ENCODE measurements at regions of chr1 and their contacts with region 1.

Region 1: DNA sequence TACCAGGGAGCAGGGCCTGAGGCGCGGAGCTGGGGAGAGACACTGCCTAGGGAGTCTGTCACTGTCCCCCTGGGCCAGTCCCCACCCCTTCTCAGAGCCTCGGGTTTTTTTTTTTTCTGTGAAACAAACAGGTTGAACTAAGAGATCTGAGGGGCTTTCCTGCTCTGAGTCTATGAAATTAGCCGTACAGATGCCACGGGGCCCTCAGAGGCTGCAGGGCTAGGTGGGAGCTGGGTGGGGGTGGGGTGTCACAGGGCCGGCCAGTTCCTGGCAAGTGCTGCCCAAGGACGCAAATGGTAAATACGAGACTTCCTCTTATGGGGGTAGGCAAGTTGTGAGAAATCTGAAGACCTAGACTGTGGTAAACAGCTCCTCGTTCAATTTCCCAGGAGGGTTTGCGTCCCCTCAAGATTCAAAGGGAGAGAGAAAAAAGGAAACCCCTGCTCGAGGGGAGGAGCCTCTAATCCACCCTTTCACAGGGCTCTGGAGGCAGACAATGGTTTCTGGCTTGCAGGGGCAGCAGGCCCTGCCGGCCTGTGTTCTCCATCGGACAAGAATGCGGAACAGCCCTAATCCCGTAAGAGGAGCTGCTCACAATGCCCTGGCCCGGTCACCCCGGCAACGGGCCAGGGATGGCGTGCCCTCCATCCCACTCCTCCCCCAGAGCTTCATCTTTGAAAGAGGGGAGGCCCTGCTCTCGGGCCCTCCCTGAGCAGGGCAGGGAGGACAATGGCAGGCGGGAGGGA is 7.8 kb downstream of the NUAK2 start:
- DNase-seq: peak; percentile 90
- ATAC-seq: peak; percentile 83
- H3K4me3 ChIP-seq: peak overlapping the region; percentile 39 to 74 (median 56)
- H3K4me3 Mint-ChIP-seq: peak overlapping the region; percentile 94
- H3K27ac ChIP-seq: peak overlapping the region; percentile 82 to 98
- H3K27ac Mint-ChIP-seq: peak overlapping the region; percentile 98
- H3K4me1 ChIP-seq: peaks cover 88 to 91% of the 10 kb centered on the region in 2 donors
- H3K4me1 Mint-ChIP-seq: peaks cover 93% of the 10 kb centered on the region
- H3K27me3 ChIP-seq: no peaks in the 10 kb centered on the region
- H3K27me3 Mint-ChIP-seq: no peaks in the 10 kb centered on the region
- CTCF ChIP-seq: no peak

Region 2: DNA sequence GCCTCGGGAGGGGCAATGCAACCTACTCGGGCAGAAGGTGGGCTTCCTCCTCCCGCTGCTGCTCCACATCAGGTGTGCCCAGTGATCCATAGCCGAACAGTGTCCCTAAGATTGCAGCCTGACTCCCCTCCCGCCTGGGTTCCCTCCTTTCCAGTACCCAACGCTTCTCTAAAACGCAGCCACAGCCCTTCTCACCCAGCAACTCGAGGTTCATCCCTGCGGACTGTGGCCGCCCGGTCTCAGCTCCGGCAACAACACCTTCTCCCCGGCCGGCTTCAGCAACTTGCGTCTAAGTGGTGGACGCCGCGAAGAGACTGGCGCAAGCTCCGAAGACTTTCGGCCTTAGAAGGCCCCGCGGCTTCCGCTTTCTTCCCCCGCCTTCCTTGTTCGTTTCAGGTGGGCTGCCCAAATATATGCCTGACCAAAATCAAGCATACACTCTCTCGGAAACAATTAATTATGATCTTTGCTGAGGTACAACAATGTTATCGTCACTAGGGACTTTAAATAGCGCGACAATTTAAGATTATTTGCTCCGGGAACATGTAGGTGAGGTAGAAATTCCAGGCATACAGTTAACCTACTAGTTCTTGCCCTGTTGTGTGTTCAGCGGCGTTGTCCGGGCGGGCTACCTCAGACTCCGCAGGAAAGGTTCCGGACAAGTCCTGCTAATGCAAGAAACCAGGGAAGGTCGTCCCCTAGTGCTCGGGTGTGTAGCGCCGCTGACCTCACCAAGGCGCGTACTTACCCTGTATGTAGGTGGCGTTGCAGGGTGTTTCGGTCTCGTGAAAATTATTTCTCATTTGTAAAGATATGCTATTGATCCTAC is 191.9 kb before region 1 on chr1 and contains the start of gene RBBP5:
- CTCF ChIA-PET with region 1: no interaction called
- POLR2A ChIA-PET with region 1: no interaction called
- intact Hi-C with region 1: loop called (anchors 2 kb)
- DNase-seq: peak; percentile 99
- ATAC-seq: peak; percentile 93
- H3K4me3 ChIP-seq: peak within 1 kb of the TSS; percentile 74 to 99 (median 87)
- H3K4me3 Mint-ChIP-seq: peak within 1 kb of the TSS; percentile 98
- H3K27ac ChIP-seq: peak within 1 kb of the TSS; percentile 95 to 96
- H3K27ac Mint-ChIP-seq: peak within 1 kb of the TSS; percentile 100
- H3K4me1 ChIP-seq: peaks cover 31 to 40% of the 10 kb centered on the region in 2 donors
- H3K4me1 Mint-ChIP-seq: peaks cover 48% of the 10 kb centered on the region
- H3K27me3 ChIP-seq: no peaks in the 10 kb centered on the region
- H3K27me3 Mint-ChIP-seq: no peaks in the 10 kb centered on the region
- CTCF ChIP-seq: peak; percentile 73
- total RNA-seq, gene RBBP5: 18.5 and 31.7 TPM in 2 replicates

Region 3: DNA sequence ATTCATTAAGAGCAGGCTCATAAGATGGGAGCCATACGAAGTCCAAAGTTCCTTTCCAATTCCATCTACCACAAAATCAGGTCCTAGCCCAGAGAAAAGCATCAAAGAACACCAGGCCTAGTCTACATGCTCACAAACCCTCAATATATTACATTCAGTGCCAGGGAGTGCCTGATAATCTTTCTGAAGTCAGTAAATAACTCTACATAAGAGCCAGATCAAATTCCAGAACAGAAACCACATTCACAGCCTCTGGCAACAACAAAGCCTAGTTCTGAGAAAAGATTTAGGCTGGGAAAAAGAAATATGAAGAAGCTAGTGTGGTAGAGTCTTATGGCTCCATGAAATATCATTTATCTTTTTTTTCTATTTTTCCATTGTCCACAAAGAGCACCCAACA is 151.4 kb before region 1 on chr1:
- CTCF ChIA-PET with region 1: no interaction called
- POLR2A ChIA-PET with region 1: no interaction called
- intact Hi-C with region 1: no loop called
- DNase-seq: no peak
- ATAC-seq: no peak
- H3K4me3 ChIP-seq: no peak overlapping the region
- H3K4me3 Mint-ChIP-seq: no peak overlapping the region
- H3K27ac ChIP-seq: no peak overlapping the region
- H3K27ac Mint-ChIP-seq: no peak overlapping the region
- H3K4me1 ChIP-seq: no peaks in the 10 kb centered on the region
- H3K4me1 Mint-ChIP-seq: no peaks in the 10 kb centered on the region
- H3K27me3 ChIP-seq: no peaks in the 10 kb centered on the region
- H3K27me3 Mint-ChIP-seq: no peaks in the 10 kb centered on the region
- CTCF ChIP-seq: no peak

Region 4: GRCh38 chr1:205294175-205294913 is 19.4 kb before region 1 on chr1:
- CTCF ChIA-PET with region 1: interaction called, 2,421 read pairs
- POLR2A ChIA-PET with region 1: interaction called, 372 read pairs
- intact Hi-C with region 1: no loop called
- DNase-seq: no peak
- ATAC-seq: no peak
- H3K4me3 ChIP-seq: no peak overlapping the region
- H3K4me3 Mint-ChIP-seq: no peak overlapping the region
- H3K27ac ChIP-seq: no peak overlapping the region
- H3K27ac Mint-ChIP-seq: peak overlapping the region; percentile 81
- H3K4me1 ChIP-seq: peaks cover 64 to 89% of the 10 kb centered on the region in 2 donors
- H3K4me1 Mint-ChIP-seq: peaks cover 79% of the 10 kb centered on the region
- H3K27me3 ChIP-seq: no peaks in the 10 kb centered on the region
- H3K27me3 Mint-ChIP-seq: no peaks in the 10 kb centered on the region
- CTCF ChIP-seq: no peak

Region 5: GRCh38 chr1:205300886-205301821 is 12.6 kb before region 1 on chr1:
- CTCF ChIA-PET with region 1: interaction called, 2,421 read pairs
- POLR2A ChIA-PET with region 1: interaction called, 15 read pairs
- intact Hi-C with region 1: no loop called
- DNase-seq: peak; percentile 61
- ATAC-seq: peak; percentile 70
- H3K4me3 ChIP-seq: no peak overlapping the region
- H3K4me3 Mint-ChIP-seq: peak overlapping the region; percentile 55
- H3K27ac ChIP-seq: peak overlapping the region; percentile 28 to 75
- H3K27ac Mint-ChIP-seq: peak overlapping the region; percentile 86
- H3K4me1 ChIP-seq: peaks cover 32 to 53% of the 10 kb centered on the region in 2 donors
- H3K4me1 Mint-ChIP-seq: peaks cover 64% of the 10 kb centered on the region
- H3K27me3 ChIP-seq: no peaks in the 10 kb centered on the region
- H3K27me3 Mint-ChIP-seq: no peaks in the 10 kb centered on the region
- CTCF ChIP-seq: no peak